ENCODE measurements at regions of chr3 and their contacts with region 1.

Region 1: GRCh38 chr3:132352541-132353143 is 35.4 kb downstream of the ACP3 start:
- DNase-seq: peak; percentile 29 to 73 (median 65)
- ATAC-seq: peak; percentile 93
- H3K4me3 ChIP-seq: no peak overlapping the region
- H3K4me3 Mint-ChIP-seq: no peak overlapping the region
- H3K27ac ChIP-seq: no peak overlapping the region
- H3K27ac Mint-ChIP-seq: no peak overlapping the region
- H3K4me1 ChIP-seq: no peaks in the 10 kb centered on the region
- H3K4me1 Mint-ChIP-seq: no peaks in the 10 kb centered on the region
- H3K27me3 ChIP-seq: no peaks in the 10 kb centered on the region
- H3K27me3 Mint-ChIP-seq: peaks cover 10% of the 10 kb centered on the region
- CTCF ChIP-seq: peak; percentile 92

Region 2: GRCh38 chr3:132399054-132399929 is 46.6 kb after region 1 on chr3:
- CTCF ChIA-PET with region 1: interaction called, 6 read pairs
- POLR2A ChIA-PET with region 1: no interaction called
- intact Hi-C with region 1: loop called (anchors 1 to 2 kb)
- DNase-seq: peak in 3 of 9 experiments; percentile 4 to 50 (median 44)
- ATAC-seq: peak; percentile 46
- H3K4me3 ChIP-seq: no peak overlapping the region
- H3K4me3 Mint-ChIP-seq: no peak overlapping the region
- H3K27ac ChIP-seq: no peak overlapping the region
- H3K27ac Mint-ChIP-seq: no peak overlapping the region
- H3K4me1 ChIP-seq: no peaks in the 10 kb centered on the region
- H3K4me1 Mint-ChIP-seq: no peaks in the 10 kb centered on the region
- H3K27me3 ChIP-seq: no peaks in the 10 kb centered on the region
- H3K27me3 Mint-ChIP-seq: no peaks in the 10 kb centered on the region
- CTCF ChIP-seq: peak; percentile 46

Region 3: GRCh38 chr3:132432639-132433038 is 80.0 kb after region 1 on chr3:
- CTCF ChIA-PET with region 1: no interaction called
- POLR2A ChIA-PET with region 1: no interaction called
- intact Hi-C with region 1: no loop called
- DNase-seq: peak in 1 of 9 experiments; percentile 9
- ATAC-seq: peak; percentile 69
- H3K4me3 ChIP-seq: no peak overlapping the region
- H3K4me3 Mint-ChIP-seq: no peak overlapping the region
- H3K27ac ChIP-seq: no peak overlapping the region
- H3K27ac Mint-ChIP-seq: no peak overlapping the region
- H3K4me1 ChIP-seq: no peaks in the 10 kb centered on the region
- H3K4me1 Mint-ChIP-seq: peaks cover 18% of the 10 kb centered on the region
- H3K27me3 ChIP-seq: no peaks in the 10 kb centered on the region
- H3K27me3 Mint-ChIP-seq: no peaks in the 10 kb centered on the region
- CTCF ChIP-seq: no peak

Region 4: DNA sequence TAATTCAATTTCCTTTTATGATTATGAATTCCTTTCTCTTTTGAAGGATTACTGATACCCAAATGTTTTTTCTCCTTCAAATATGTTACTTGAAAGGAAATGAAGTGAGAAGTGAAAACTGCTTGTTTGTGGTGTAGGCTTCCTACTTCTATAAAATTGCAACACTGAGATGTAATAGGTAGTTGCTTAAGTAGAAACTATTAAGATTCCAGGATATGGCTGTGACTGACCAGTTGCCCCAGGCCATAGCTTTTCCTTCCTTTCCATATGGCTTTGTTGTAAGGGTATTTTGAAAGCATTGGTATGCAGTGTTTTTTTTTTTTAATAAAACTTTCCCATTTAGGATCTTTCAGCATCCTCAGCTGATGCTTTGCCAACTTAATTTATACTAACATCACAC is 93.2 kb after region 1 on chr3:
- CTCF ChIA-PET with region 1: no interaction called
- POLR2A ChIA-PET with region 1: no interaction called
- intact Hi-C with region 1: loop called (anchors 10 kb)
- DNase-seq: no peak
- ATAC-seq: no peak
- H3K4me3 ChIP-seq: no peak overlapping the region
- H3K4me3 Mint-ChIP-seq: no peak overlapping the region
- H3K27ac ChIP-seq: no peak overlapping the region
- H3K27ac Mint-ChIP-seq: no peak overlapping the region
- H3K4me1 ChIP-seq: no peaks in the 10 kb centered on the region
- H3K4me1 Mint-ChIP-seq: peaks cover 19% of the 10 kb centered on the region
- H3K27me3 ChIP-seq: no peaks in the 10 kb centered on the region
- H3K27me3 Mint-ChIP-seq: no peaks in the 10 kb centered on the region
- CTCF ChIP-seq: no peak

Region 5: GRCh38 chr3:132456571-132456970 is 103.9 kb after region 1 on chr3:
- CTCF ChIA-PET with region 1: no interaction called
- POLR2A ChIA-PET with region 1: no interaction called
- intact Hi-C with region 1: loop called in 1 of 2 experiments (anchors 10 kb)
- DNase-seq: no peak
- ATAC-seq: no peak
- H3K4me3 ChIP-seq: no peak overlapping the region
- H3K4me3 Mint-ChIP-seq: no peak overlapping the region
- H3K27ac ChIP-seq: no peak overlapping the region
- H3K27ac Mint-ChIP-seq: no peak overlapping the region
- H3K4me1 ChIP-seq: no peaks in the 10 kb centered on the region
- H3K4me1 Mint-ChIP-seq: no peaks in the 10 kb centered on the region
- H3K27me3 ChIP-seq: no peaks in the 10 kb centered on the region
- H3K27me3 Mint-ChIP-seq: no peaks in the 10 kb centered on the region
- CTCF ChIP-seq: no peak

Region 6: DNA sequence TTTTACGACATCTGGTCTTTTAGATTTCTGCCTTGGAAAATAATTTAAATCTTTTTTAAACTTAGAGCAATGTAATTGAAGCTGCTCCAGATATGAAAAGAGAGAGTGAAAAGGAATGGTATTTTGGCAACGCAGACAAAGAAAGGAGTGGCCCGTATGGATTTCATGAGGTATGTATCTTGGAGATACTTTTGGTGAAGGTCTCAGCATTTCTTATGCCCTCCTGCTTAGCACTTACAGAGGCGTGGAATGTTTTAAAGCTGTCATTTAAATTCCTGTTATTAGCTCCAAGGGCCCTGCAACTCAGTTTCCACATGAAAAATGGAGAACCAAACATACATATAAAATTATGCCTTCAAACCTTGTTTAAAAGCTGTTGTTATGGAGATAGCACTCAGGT is 129.5 kb after region 1 on chr3:
- CTCF ChIA-PET with region 1: no interaction called
- POLR2A ChIA-PET with region 1: no interaction called
- intact Hi-C with region 1: loop called in 1 of 2 experiments (anchors 5 kb)
- DNase-seq: no peak
- ATAC-seq: no peak
- H3K4me3 ChIP-seq: no peak overlapping the region
- H3K4me3 Mint-ChIP-seq: no peak overlapping the region
- H3K27ac ChIP-seq: no peak overlapping the region
- H3K27ac Mint-ChIP-seq: no peak overlapping the region
- H3K4me1 ChIP-seq: no peaks in the 10 kb centered on the region
- H3K4me1 Mint-ChIP-seq: no peaks in the 10 kb centered on the region
- H3K27me3 ChIP-seq: no peaks in the 10 kb centered on the region
- H3K27me3 Mint-ChIP-seq: no peaks in the 10 kb centered on the region
- CTCF ChIP-seq: no peak

Region 7: GRCh38 chr3:132499071-132499470 is 146.4 kb after region 1 on chr3:
- CTCF ChIA-PET with region 1: no interaction called
- POLR2A ChIA-PET with region 1: no interaction called
- intact Hi-C with region 1: loop called in 1 of 2 experiments (anchors 10 kb)
- DNase-seq: no peak
- ATAC-seq: no peak
- H3K4me3 ChIP-seq: no peak overlapping the region
- H3K4me3 Mint-ChIP-seq: no peak overlapping the region
- H3K27ac ChIP-seq: no peak overlapping the region
- H3K27ac Mint-ChIP-seq: no peak overlapping the region
- H3K4me1 ChIP-seq: no peaks in the 10 kb centered on the region
- H3K4me1 Mint-ChIP-seq: no peaks in the 10 kb centered on the region
- H3K27me3 ChIP-seq: no peaks in the 10 kb centered on the region
- H3K27me3 Mint-ChIP-seq: no peaks in the 10 kb centered on the region
- CTCF ChIP-seq: no peak

Region 8: DNA sequence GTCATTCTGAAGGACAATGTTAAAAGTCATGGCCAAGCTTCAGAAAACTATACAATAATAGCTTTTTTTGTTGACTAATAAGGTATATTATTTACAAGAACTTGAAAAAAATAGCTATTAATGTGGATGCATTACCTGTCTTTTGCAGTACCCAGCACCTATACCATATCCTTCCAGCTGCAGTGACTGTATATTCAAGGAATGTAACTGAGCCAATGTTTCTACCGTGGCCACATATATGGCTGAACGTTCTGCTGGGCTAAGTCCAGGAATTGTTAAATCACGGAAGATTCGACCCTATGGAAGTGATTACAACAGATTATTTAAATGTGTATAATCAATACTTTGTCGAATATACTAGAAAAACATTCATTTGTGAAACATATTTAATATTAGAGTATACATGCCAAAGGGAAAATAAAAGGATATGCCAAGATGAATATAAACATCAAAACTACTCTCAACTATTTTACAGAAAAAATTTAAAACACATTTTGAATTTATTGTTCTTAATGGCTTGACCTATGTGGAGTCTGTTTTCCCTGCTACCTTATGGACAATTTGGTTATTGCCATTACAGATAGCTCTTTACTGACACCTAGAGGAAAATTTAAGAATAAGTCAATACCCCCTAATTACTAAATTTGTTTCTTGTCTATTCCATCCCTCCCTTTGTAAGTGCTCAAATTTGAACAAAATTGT is 289.3 kb after region 1 on chr3:
- CTCF ChIA-PET with region 1: interaction called, 20 read pairs
- POLR2A ChIA-PET with region 1: no interaction called
- intact Hi-C with region 1: loop called in 1 of 2 experiments (anchors 2 kb)
- DNase-seq: peak in 2 of 9 experiments; percentile 39 to 55
- ATAC-seq: peak; percentile 54
- H3K4me3 ChIP-seq: no peak overlapping the region
- H3K4me3 Mint-ChIP-seq: no peak overlapping the region
- H3K27ac ChIP-seq: no peak overlapping the region
- H3K27ac Mint-ChIP-seq: no peak overlapping the region
- H3K4me1 ChIP-seq: no peaks in the 10 kb centered on the region
- H3K4me1 Mint-ChIP-seq: peaks cover 5% of the 10 kb centered on the region
- H3K27me3 ChIP-seq: no peaks in the 10 kb centered on the region
- H3K27me3 Mint-ChIP-seq: no peaks in the 10 kb centered on the region
- CTCF ChIP-seq: peak; percentile 85

Measured in CD8-positive, alpha-beta T cell (primary cell).